ENCODE measurements at regions of chr2 and their contacts with region 1.

Region 1: DNA sequence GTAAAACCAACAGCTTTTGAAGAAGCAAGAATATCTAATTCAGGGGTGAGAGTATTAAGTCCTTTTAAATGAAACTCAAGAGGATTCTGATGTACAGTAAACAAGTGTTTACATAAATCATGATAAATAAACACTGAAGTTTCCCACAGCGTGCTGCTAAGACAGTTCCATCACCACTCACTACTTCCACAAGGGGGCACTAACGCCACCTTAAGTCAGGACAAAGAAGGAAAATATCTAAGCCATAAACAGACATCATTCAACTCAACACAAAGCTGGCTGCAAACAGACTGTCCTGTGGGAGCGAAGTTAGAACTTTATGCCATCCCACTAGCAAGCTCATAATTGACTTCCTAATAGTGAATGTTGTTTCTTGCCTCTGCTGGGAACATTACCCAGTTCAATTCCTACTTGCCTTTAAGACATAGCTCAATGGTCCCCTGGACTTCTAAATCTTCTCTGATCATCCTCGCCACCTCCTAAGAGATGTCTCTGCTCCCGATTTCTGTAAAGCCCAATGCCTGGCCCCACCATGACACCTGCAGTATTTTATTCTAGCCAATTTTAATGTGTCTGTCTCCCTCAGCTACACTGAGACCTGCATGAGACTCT is 36.5 kb downstream of the MRPL44 start:
- H3K4me3 ChIP-seq: no peak overlapping the region
- H3K27ac ChIP-seq: no peak overlapping the region
- H3K4me1 ChIP-seq: no peaks in the 10 kb centered on the region
- CTCF ChIP-seq: peak; percentile 69

Region 2: GRCh38 chr2:223976635-223977226 is 17.0 kb before region 1 on chr2:
- CTCF ChIA-PET with region 1: interaction called, 43 read pairs
- POLR2A ChIA-PET with region 1: no interaction called
- H3K4me3 ChIP-seq: no peak overlapping the region
- H3K27ac ChIP-seq: no peak overlapping the region
- H3K4me1 ChIP-seq: no peaks in the 10 kb centered on the region
- CTCF ChIP-seq: no peak

Region 3: DNA sequence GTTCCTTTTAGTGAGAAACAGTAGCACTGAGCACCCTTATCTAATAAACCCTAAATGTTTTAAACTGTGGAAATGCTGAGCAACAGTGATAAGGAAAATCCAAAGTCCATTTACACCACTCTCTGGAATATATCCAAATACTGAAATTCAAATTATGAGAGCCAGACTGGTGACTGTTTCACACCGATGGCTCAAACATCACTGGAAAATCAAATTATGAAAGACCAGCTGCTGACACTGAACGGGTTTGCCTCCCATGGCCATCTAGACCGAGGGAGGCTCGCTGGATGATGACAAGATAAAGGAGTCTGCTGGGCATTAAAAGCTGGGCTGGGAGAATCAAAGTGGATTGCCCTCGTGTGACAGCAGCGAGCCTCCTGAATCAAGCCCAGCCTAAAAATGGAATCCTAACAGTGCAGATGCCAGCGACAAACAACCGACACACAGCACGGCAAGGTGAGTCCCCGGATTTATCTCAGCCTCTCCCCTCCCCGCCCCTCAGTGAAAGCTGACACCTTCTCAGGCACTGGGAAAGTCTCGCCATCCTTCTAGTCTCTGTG is 15.1 kb after region 1 on chr2:
- CTCF ChIA-PET with region 1: interaction called, 56 read pairs
- POLR2A ChIA-PET with region 1: no interaction called
- H3K4me3 ChIP-seq: no peak overlapping the region
- H3K27ac ChIP-seq: no peak overlapping the region
- H3K4me1 ChIP-seq: 0 out of 2 replicates have a peak, but pooled peaks cover 2% of the 10 kb centered on the region
- CTCF ChIP-seq: no peak

Region 4: DNA sequence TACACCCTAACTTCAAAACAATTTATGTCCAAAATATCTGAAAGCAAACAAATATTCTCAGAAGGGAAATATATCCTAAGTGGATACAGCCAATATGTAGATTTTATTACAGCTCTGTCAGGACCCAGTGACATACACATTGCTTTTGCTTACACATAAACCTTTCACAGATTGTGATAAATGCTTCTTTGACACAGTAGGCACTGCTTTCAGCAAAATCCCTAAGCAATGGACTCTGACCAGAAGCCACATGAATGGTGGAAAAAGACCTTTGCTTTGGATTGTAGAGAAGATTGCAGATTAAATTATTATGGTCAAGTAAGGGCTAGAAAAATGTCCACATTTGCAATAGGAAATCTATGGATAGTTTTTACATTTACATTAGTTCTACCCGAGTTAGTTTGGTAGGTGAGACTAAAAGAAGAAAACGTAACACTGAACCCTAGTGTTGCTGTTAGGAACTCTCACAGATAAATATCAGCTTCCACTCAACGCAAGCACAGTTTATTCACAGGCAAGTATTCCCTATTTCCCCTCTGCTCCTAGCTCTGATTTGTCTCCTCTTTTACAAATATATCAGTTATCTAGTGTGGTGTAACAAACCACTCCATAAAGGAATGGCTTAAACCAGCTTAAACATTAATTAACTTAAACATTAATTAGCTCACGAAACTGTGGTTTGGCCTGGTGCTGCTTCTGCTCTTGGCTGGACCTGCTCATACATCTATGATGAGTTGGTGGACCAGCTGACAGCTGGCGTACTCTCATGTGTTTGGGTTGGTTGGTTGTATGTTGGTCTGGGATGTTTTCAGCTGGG is 69.0 kb after region 1 on chr2:
- CTCF ChIA-PET with region 1: interaction called, 10 read pairs
- POLR2A ChIA-PET with region 1: no interaction called
- H3K4me3 ChIP-seq: no peak overlapping the region
- H3K27ac ChIP-seq: no peak overlapping the region
- H3K4me1 ChIP-seq: no peaks in the 10 kb centered on the region
- CTCF ChIP-seq: no peak

Region 5: DNA sequence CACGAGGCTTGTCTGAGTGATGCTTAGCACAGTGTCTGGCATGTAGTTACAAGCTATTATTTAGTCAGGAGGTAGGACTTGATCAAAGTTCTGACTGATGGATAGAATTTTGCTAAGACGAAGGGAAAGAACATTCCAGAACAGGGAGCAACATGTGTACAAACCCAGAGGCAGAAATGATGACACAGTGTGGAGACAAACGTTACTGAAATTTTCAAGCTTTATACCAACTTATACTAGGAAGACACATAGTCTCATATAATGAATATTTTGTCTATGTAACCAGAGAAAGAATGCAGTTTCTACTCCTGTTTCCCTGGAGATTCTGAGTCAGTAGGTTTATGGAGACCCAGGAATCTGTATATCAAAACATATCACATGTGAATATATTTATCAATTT is 284.8 kb after region 1 on chr2:
- CTCF ChIA-PET with region 1: interaction called, 205 read pairs
- POLR2A ChIA-PET with region 1: no interaction called
- H3K4me3 ChIP-seq: no peak overlapping the region
- H3K27ac ChIP-seq: no peak overlapping the region
- H3K4me1 ChIP-seq: no peaks in the 10 kb centered on the region
- CTCF ChIP-seq: no peak

Region 6: DNA sequence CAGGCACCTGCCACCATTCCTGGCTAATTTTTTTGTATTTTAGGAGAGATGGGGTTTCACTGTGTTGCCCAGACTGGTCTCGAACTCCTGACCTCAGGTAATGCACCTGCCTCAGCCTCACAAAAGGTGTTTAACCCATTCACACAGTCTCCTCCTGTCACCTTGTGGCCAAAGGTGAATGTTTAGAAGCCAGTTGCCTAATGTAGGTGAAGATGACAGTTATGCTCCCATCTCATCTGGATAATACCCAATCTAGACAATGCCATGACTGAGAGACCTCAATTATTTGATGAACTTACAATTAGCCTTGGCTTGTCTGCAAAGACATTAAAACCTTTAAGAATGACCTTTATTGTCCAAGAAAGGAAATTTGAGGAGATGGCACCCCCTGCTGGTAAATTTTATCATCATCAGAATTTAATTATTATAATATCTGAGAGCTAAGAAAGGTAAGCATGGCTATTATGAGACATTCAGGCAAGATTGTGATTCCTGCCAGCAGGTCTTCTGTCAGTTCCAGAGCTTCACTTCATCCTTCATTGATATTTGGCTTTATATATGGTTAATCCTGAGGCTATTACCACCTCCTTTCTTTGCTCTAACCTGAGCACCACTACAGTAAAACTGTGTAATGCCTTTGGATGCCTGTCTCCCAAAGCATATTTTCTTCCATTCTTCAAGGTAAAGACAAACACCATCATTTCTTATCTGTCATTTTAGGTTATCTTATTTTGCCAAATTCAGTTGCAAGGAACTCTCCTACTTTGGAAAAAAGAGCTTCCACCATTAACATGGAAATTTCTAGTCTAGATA is 290.6 kb after region 1 on chr2:
- CTCF ChIA-PET with region 1: interaction called, 205 read pairs
- POLR2A ChIA-PET with region 1: no interaction called
- H3K4me3 ChIP-seq: no peak overlapping the region
- H3K27ac ChIP-seq: no peak overlapping the region
- H3K4me1 ChIP-seq: no peaks in the 10 kb centered on the region
- CTCF ChIP-seq: peak; percentile 77

Measured in HEK293 (cell line).